ENCODE measurements at regions of chr2 and their contacts with region 1.

Region 1: DNA sequence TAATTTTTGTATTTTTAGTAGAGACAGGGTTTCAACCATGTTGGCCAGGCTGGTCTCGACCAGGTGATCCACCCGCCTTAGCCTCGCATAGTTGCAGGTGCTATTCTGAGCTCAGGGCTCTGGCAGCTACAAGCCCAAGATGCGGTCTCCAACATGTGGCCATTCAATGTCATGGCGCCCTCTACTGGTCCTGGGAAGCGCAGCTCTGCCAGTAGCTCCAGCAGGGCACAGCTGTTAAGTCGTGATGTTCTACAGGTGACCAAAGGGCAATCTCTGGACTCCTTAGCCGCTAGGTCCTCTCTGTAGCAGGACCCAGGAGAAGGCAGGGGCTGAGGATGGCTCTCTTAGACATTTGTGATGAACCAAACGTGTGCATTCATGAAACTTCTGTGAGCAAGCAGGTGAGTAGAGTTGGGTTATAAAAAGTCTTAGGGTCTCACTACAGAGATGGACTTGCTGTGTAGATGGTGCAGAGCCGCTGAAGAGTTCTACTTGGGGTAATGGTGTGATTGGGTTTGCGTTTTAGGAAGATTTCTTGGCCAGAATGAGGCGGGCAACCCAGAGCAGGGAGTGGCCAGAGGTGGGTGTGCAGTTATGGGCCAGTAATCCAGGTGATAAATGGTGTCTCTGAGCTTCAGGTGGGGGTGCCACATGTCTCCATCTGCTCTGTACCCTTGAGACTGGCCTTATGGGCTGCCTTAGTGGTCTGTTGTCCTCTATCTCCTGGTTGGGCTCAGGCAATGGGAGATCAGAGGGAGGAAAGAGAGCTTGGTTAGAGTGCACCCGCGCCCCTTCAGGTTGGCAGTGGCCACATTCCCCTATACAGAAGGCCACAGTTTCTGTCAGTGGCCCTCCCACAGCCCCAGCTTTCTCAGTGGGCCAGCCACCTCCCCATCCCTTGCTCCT is 31.0 kb downstream of the IL37 start:
- DNase-seq: peak; percentile 76
- CTCF ChIP-seq: peak; percentile 98

Region 2: GRCh38 chr2:112606488-112606902 is 335.5 kb before region 1 on chr2:
- CTCF ChIA-PET with region 1: interaction called, 25 read pairs
- POLR2A ChIA-PET with region 1: no interaction called
- DNase-seq: no peak
- CTCF ChIP-seq: no peak

Region 3: DNA sequence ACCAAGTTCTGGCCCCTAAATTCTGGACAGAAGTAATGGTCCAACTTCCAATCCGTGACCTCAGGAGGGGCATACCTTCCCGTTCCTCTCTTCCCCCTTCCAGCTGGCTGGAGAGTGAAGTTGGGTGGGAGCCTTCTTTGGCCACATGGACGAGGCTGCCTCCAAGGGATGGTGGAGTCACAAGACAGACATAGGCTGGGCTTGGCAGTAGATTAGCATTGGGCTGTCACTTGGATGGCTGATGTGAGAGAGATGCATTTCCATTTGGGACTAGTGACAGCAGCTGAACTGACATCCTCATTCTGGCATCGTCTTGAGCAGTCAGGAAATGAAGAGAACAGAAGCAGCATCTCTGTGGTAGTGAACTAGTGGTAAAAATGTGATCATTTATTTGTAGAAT is 208.6 kb before region 1 on chr2:
- CTCF ChIA-PET with region 1: interaction called, 56 read pairs
- POLR2A ChIA-PET with region 1: no interaction called
- DNase-seq: no peak
- CTCF ChIP-seq: no peak

Region 4: GRCh38 chr2:112764071-112765044 is 177.6 kb before region 1 on chr2 and contains the start of gene CKAP2L:
- CTCF ChIA-PET with region 1: interaction called, 16 read pairs
- POLR2A ChIA-PET with region 1: no interaction called
- DNase-seq: peak; percentile 97
- CTCF ChIP-seq: no peak

Region 5: DNA sequence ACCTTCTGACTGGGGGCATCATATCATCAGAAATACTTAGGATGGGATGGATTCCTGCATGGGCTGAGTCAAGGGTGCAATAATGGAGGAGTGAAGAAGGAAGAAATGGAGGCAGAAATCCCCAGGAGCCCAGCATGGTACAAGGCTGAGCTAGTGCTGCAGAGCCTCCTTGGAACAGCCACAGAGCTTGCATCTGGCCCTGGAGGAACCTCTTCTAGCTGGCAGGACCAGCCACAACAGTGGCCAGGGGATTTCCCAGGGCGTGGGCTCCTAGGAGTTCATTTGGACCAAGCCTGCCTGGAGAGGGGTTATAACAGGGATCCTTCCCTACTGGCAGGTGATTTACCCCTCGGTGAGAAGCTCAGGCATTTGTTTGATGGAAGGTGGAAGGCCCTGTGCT is 35.7 kb before region 1 on chr2:
- CTCF ChIA-PET with region 1: interaction called, 24 read pairs
- POLR2A ChIA-PET with region 1: no interaction called
- DNase-seq: no peak
- CTCF ChIP-seq: no peak

Region 6: GRCh38 chr2:112958428-112959108 is 16.6 kb after region 1 on chr2:
- CTCF ChIA-PET with region 1: interaction called, 40 read pairs
- POLR2A ChIA-PET with region 1: no interaction called
- DNase-seq: peak; percentile 59
- CTCF ChIP-seq: peak; percentile 79

Region 7: GRCh38 chr2:113012436-113013335 is 70.7 kb after region 1 on chr2:
- CTCF ChIA-PET with region 1: no interaction called
- POLR2A ChIA-PET with region 1: no interaction called
- DNase-seq: no peak
- CTCF ChIP-seq: no peak